ENCODE measurements at regions of chr18 and their contacts with region 1.

Region 1: DNA sequence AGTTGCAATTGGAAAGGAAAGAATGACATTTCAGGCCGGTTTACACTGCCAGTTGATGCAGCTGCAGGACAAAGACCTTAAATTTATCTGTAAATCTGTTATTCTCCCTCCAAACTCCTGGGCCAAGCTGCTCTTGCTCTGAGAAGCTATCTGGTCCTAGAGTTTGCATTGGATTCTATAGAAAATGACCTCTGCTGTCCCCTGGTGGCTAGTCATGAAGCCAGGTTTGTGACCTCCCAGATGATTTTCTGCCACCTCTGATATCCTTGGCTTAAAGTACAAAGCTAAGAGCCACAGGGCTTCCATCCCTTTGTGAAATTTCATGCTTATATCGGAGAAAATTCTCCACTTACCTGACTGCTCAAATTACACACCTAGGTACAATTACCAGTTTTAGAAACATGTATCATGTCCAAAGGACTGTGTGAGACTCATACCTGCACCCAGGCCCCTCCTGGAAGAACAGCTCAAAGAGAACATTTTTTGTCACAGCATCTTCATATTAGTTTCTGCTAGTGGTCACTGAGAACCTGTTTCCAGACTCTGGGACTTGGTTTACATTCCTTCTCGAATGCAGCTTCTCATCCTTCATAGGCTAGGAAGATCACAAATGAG is 28.9 kb upstream of the IER3IP1 start:
- DNase-seq: peak; percentile 26
- CTCF ChIP-seq: peak; percentile 76

Region 2: GRCh38 chr18:47050468-47050867 is 154.5 kb before region 1 on chr18:
- CTCF ChIA-PET with region 1: interaction called, 26 read pairs
- POLR2A ChIA-PET with region 1: no interaction called
- DNase-seq: peak; percentile 42
- CTCF ChIP-seq: peak; percentile 72

Region 3: DNA sequence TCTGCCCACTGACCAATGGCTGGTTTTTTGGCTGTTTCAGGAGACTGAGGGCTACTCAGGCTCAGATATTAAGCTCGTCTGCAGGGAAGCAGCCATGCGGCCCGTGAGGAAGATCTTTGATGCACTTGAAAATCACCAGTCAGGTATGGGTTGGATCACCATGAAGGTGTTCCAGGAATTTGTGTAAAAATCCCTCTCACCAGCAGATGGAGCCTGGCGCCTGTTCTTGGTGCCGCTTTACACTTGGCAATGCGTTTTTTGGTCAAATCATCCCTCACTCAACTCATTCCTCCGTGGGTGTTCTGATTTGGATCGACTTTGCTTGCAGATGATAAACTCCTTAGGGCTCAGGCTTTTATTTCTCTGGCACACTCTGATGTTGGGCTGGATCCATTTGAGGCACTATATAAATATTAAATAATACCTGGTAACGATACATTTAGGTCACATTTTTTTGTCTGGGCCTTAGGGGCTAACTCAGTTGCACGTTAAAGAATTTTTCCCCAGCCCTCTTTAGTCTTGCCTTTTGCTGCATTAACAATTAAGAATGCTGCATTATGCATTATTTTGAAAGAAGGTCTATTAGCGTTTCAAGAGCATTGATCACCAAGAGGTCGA is 104.7 kb before region 1 on chr18:
- CTCF ChIA-PET with region 1: interaction called, 117 read pairs
- POLR2A ChIA-PET with region 1: no interaction called
- DNase-seq: peak; percentile 47
- CTCF ChIP-seq: peak; percentile 71

Region 4: GRCh38 chr18:47120428-47120827 is 84.6 kb before region 1 on chr18:
- CTCF ChIA-PET with region 1: interaction called, 11 read pairs
- POLR2A ChIA-PET with region 1: no interaction called
- DNase-seq: no peak
- CTCF ChIP-seq: no peak

Region 5: GRCh38 chr18:47215554-47216138 is 10.6 kb after region 1 on chr18:
- CTCF ChIA-PET with region 1: interaction called, 28 read pairs
- POLR2A ChIA-PET with region 1: no interaction called
- DNase-seq: peak; percentile 13
- CTCF ChIP-seq: peak; percentile 61

Region 6: DNA sequence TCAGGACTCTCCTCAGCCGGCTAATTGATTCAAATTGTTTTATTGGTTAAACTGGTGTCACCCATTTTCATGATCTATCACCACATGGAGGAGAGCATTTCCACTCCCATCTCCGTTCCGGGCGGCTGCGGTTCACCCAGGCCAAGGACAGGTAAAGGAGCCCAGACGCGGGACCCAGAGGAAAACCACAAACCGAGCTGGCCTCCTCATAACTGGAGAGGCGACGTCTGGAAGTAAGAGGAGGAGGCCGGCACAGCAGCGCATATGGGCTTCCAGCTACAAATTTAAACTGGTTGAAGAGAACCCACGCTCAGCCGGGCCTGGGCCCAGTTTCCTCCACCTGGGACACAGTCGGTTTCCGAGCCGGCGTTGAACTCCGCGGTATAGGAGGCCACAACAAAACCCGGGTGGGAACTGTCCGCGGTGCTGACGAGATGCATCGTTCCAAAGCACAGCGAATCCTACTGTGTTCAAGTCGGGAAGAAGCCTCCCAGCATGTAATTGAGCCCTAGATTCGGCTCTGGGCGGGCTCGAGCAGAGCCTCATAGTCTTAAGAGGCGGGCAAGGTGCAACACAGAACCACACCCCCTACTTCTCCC is 49.4 kb after region 1 on chr18:
- CTCF ChIA-PET with region 1: no interaction called
- POLR2A ChIA-PET with region 1: no interaction called
- DNase-seq: peak; percentile 41
- CTCF ChIP-seq: no peak

Region 7: DNA sequence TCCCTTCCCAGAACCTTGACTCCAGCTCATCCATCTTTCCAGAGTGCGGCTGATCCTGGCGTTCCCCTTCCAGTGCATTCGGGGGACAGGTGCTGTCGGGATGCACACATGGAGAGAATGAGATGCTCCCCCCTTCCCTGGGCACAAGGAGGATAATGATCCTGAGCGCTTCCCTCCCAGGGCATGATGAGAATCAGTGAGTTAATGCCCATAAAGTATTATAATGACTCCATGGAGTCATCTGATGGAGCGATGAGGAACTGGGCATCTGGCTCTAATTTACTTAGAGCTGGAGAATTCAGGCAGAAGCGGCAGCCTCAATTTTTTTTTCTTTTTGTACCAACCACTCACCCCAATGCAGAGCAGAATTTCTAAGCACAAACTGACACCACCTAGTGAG is 126.0 kb after region 1 on chr18:
- CTCF ChIA-PET with region 1: no interaction called
- POLR2A ChIA-PET with region 1: no interaction called
- DNase-seq: no peak
- CTCF ChIP-seq: no peak

Region 8: GRCh38 chr18:47512056-47512455 is 307.0 kb after region 1 on chr18:
- CTCF ChIA-PET with region 1: no interaction called
- POLR2A ChIA-PET with region 1: no interaction called
- DNase-seq: no peak
- CTCF ChIP-seq: no peak